MCF 10A (cell line): ENCODE measurements at regions of chr10 and their contacts with region 1.

Region 1: GRCh38 chr10:32445740-32446535 is at the start of gene CCDC7:
- DNase-seq: peak; percentile 84
- H3K4me3 Mint-ChIP-seq: peak within 1 kb of the TSS; percentile 90
- H3K27ac Mint-ChIP-seq: peak within 1 kb of the TSS; percentile 93
- H3K4me1 Mint-ChIP-seq: no peaks in the 10 kb centered on the region
- H3K27me3 Mint-ChIP-seq: no peaks in the 10 kb centered on the region
- CTCF ChIP-seq: peak; percentile 13
- total RNA-seq, gene CCDC7: 6.3 and 9.2 TPM in 2 replicates

Region 2: DNA sequence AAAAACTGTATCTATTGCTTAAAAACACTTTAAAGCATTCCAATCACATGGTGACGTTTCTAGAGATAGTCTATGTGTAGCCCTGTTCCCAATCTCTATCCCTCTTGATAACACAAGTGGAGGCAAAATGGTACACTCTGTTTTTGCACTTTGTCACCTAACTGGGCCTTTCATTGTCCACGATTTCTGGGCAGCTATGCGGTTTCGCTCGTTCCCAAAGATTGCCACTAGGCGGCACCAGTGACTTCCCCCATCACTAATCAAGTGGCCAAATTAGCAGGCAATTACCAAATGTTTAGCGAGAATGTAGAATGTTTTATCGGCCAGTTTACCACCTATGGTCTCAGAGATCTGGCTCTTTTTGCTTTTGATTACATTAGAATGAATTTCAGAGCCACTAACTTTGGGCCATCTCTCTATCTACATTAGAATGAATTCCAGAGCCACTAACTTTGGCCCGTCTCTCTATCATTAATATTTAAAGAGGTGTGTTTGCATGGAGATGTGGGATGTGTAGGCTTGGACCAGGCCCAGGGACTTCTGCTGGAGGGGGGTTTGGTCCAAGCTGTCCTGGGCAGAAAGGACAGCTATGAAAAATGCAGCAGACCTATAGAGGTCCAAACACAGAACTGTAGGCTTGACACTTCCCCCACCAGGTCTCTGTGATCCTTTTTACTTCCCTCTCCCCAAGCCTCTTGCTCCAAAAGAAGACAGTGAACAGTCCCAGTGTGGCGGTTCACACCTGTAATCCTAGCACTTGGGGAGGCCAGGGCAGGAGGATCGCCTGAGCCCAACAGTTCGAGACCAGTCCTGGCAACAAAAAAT is 189.1 kb before region 1 on chr10:
- CTCF ChIA-PET with region 1: no interaction called
- POLR2A ChIA-PET with region 1: no interaction called
- intact Hi-C with region 1: loop called (anchors 10 kb)
- DNase-seq: peak; percentile 77
- H3K4me3 Mint-ChIP-seq: no peak overlapping the region
- H3K27ac Mint-ChIP-seq: no peak overlapping the region
- H3K4me1 Mint-ChIP-seq: peaks cover 9% of the 10 kb centered on the region
- H3K27me3 Mint-ChIP-seq: no peaks in the 10 kb centered on the region
- CTCF ChIP-seq: peak; percentile 85

Region 3: GRCh38 chr10:32378363-32379317 is 67.3 kb before region 1 on chr10:
- CTCF ChIA-PET with region 1: interaction called, 3 read pairs
- POLR2A ChIA-PET with region 1: interaction called, 34 read pairs
- intact Hi-C with region 1: loop called (anchors 2 kb)
- DNase-seq: peak; percentile 91
- H3K4me3 Mint-ChIP-seq: no peak overlapping the region
- H3K27ac Mint-ChIP-seq: no peak overlapping the region
- H3K4me1 Mint-ChIP-seq: peaks cover 9% of the 10 kb centered on the region
- H3K27me3 Mint-ChIP-seq: no peaks in the 10 kb centered on the region
- CTCF ChIP-seq: no peak